ENCODE measurements at regions of chr21 and their contacts with region 1.

Region 1: DNA sequence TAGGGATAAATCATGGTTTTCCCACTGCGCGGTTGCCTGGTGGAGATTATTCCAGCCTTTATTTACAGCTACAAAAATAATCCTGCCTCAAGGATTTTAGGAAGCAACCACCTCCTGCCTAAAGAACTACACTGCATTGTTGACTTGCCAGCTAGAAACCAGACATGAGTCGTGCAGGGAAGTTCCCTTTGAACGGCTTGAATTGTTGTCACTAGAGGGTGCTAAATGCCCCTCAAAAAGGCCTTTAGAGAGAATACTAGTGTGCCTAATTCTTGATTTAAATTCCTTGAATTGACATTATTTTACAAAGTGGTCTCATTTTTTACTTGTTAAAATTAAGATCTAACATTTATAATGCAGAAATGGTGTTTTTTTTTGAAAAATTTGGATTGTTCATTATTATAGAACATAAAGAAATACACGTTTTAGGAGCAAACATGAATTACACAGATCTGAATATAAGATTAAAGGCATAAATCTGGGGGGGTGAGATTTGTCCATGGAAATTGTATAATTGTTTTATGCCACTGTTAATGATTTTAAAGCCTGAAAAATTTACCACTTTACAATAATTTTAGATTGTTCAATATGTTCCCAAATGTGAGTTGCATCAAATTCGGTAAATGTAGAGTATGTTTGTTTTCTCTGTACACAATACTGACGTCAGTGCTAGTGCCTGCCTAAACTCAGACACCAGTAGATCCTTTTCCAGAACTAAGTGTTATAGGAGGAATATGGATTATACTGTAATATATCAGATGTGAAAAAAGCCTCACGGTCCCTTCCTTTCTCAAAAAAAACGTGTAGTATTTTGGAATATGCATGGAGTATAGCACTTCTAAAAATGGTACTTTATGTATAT is 7.6 kb upstream of the ERG start:
- DNase-seq: no peak
- ATAC-seq: peak; percentile 55 to 67 (median 56)
- H3K4me3 ChIP-seq: peak overlapping the region; percentile 45
- H3K27ac ChIP-seq: no peak overlapping the region
- H3K4me1 ChIP-seq: no peaks in the 10 kb centered on the region
- H3K27me3 ChIP-seq: peaks cover 0 to 3% (median 2%) of the 10 kb centered on the region in 3 donors
- CTCF ChIP-seq: peak; percentile 56

Region 2: GRCh38 chr21:38721971-38722370 is 216.1 kb after region 1 on chr21:
- intact Hi-C with region 1: loop called in 1 of 2 experiments (anchors 10 kb)
- DNase-seq: no peak
- ATAC-seq: no peak
- H3K4me3 ChIP-seq: no peak overlapping the region
- H3K27ac ChIP-seq: no peak overlapping the region
- H3K4me1 ChIP-seq: no peaks in the 10 kb centered on the region
- H3K27me3 ChIP-seq: peaks cover 0 to 4% (median 0%) of the 10 kb centered on the region in 3 donors
- CTCF ChIP-seq: no peak

Region 3: DNA sequence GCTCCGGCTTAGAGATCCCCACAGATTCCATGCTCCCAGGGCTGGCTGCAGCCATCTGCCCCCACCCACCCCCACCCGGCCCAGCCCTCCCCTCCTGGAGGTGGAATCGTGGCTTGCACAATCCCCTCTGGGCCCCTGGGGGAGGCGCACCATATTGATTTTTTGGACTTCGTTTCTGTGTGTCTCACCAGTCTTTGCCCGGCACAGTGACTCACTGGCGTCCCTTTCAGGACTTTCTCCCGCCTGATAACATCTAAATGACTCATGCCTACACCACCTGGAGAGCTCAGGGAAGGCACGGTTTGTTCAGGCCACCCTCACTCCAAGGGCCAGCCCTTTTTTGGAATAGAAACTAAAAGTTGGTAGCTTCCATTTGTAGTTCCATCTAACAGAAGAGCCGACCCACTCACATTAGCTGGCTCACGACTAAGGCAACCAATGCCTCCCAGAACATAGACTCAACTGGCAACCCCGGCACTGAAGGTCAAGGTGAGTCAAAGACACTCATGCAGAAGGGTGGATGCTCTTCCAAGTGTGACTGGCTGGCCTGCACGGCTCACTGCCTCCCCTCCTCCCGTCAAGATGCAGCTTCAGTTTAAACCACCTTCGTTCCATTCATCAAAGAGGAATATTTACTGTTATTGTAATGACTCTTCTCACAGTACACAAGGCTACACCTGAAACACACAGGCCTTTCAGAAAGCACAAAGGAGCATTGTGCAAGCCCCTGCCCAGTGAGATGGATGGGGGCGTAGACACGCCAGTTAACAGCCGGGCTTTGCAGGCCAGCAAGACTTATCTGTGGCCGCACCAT is 281.8 kb after region 1 on chr21:
- intact Hi-C with region 1: no loop called
- DNase-seq: no peak
- ATAC-seq: peak; percentile 55 to 68 (median 64)
- H3K4me3 ChIP-seq: no peak overlapping the region
- H3K27ac ChIP-seq: no peak overlapping the region
- H3K4me1 ChIP-seq: no peaks in the 10 kb centered on the region
- H3K27me3 ChIP-seq: no peaks in the 10 kb centered on the region
- CTCF ChIP-seq: no peak

Region 4: GRCh38 chr21:39137248-39138178 is 631.6 kb after region 1 on chr21:
- intact Hi-C with region 1: loop called (anchors 2 to 5 kb)
- DNase-seq: no peak
- ATAC-seq: no peak
- H3K4me3 ChIP-seq: no peak overlapping the region
- H3K27ac ChIP-seq: no peak overlapping the region
- H3K4me1 ChIP-seq: no peaks in the 10 kb centered on the region
- H3K27me3 ChIP-seq: no peaks in the 10 kb centered on the region
- CTCF ChIP-seq: no peak